Left cardiac atrium (tissue), 4 donors: ENCODE measurements at regions of chr1 and their contacts with region 1.

Region 1: GRCh38 chr1:7827126-7827955 is 25.5 kb downstream of the UTS2 start:
- DNase-seq: no peak
- ATAC-seq: no peak

Region 2: DNA sequence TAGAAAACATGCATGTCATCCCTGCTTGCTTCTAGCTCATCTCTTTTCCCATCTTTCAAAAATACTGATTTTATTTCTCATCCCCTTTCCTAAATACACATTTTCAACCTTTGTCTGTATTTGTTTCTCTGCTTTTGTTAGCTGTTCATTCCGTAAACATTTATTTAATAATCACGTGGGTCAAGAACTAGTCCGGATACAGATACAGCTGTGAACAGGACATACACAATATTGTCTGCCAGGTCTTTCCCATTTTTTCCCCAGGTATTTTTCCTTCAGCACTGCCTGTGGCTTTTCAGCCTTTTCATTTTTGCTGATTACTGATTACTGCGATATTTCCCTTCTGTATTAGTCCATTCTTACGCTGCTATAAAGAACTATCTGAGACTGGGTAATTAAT is 37.5 kb before region 1 on chr1:
- intact Hi-C with region 1: loop called in 1 of 2 experiments (anchors 5 kb)
- DNase-seq: no peak
- ATAC-seq: no peak